Sigmoid colon (tissue), 7 donors: ENCODE measurements at regions of chr17 and their contacts with region 1.

Region 1: GRCh38 chr17:40303009-40303657 is 5.8 kb upstream of the RARA start:
- DNase-seq: no peak
- H3K4me3 ChIP-seq: no peak overlapping the region
- H3K27ac ChIP-seq: peak overlapping the region; percentile 4 to 86 (median 82)
- H3K4me1 ChIP-seq: peaks cover 0 to 64% (median 62%) of the 10 kb centered on the region in 4 donors
- H3K27me3 ChIP-seq: no peaks in the 10 kb centered on the region
- CTCF ChIP-seq: peak; percentile 73 to 85 (median 76)
- EP300 ChIP-seq: no peak
- POLR2A ChIP-seq: no peak

Region 2: GRCh38 chr17:40331743-40332641 is 28.9 kb after region 1 on chr17:
- intact Hi-C with region 1: no loop called
- DNase-seq: peak; percentile 95
- H3K4me3 ChIP-seq: peak overlapping the region in 3 of 4 donors; percentile 15 to 22 (median 16)
- H3K27ac ChIP-seq: peak overlapping the region; percentile 87 to 98 (median 96)
- H3K4me1 ChIP-seq: peaks cover 0 to 100% (median 95%) of the 10 kb centered on the region in 4 donors
- H3K27me3 ChIP-seq: no peaks in the 10 kb centered on the region
- CTCF ChIP-seq: no peak
- EP300 ChIP-seq: peak in 3 of 4 donors; percentile 47 to 79 (median 57)
- POLR2A ChIP-seq: no peak

Region 3: DNA sequence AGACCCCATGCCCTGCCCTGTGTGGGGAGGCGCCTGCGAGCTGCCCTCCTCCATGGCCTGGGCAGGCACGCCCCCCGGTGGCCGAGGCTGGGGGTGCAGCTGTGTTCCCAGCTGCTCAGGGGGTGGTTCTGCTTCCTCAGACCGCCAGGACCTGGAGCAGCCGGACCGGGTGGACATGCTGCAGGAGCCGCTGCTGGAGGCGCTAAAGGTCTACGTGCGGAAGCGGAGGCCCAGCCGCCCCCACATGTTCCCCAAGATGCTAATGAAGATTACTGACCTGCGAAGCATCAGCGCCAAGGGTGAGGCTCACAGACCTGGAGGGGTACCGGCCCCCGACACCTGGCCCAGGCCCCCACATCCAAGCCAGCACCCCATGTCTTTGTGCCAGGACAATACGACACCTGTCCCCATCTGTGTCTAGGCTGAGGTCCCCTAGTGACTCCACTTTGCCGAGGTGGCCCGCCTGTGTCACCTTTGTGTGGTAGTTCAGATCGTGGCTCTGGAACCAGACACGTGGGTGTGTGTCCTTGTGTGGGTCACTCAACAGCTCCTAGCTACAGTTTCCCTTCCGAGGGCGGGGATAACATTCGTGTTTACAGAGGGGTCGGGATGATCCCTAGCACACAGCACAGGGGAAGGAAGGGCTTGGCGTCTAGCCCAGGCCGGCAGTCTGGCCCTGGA is 52.1 kb after region 1 on chr17:
- intact Hi-C with region 1: loop called (anchors 1 kb)
- DNase-seq: peak; percentile 91
- H3K4me3 ChIP-seq: no peak overlapping the region
- H3K27ac ChIP-seq: peak overlapping the region; percentile 42 to 64 (median 48)
- H3K4me1 ChIP-seq: peaks cover 0 to 64% (median 53%) of the 10 kb centered on the region in 4 donors
- H3K27me3 ChIP-seq: no peaks in the 10 kb centered on the region
- CTCF ChIP-seq: peak; percentile 95 to 99 (median 97)
- EP300 ChIP-seq: no peak
- POLR2A ChIP-seq: no peak

Region 4: GRCh38 chr17:40417609-40418427 is 114.7 kb after region 1 on chr17 and contains the start of gene TOP2A:
- intact Hi-C with region 1: loop called (anchors 5 kb)
- DNase-seq: peak; percentile 99
- H3K4me3 ChIP-seq: peak within 1 kb of the TSS; percentile 36 to 59 (median 56)
- H3K27ac ChIP-seq: peak within 1 kb of the TSS; percentile 77 to 88 (median 80)
- H3K4me1 ChIP-seq: peaks cover 0 to 17% (median 10%) of the 10 kb centered on the region in 4 donors
- H3K27me3 ChIP-seq: no peaks in the 10 kb centered on the region
- CTCF ChIP-seq: no peak
- EP300 ChIP-seq: no peak
- POLR2A ChIP-seq: no peak
- total RNA-seq, gene TOP2A: 0.33 to 2.3 (median 1.8) TPM

Region 5: DNA sequence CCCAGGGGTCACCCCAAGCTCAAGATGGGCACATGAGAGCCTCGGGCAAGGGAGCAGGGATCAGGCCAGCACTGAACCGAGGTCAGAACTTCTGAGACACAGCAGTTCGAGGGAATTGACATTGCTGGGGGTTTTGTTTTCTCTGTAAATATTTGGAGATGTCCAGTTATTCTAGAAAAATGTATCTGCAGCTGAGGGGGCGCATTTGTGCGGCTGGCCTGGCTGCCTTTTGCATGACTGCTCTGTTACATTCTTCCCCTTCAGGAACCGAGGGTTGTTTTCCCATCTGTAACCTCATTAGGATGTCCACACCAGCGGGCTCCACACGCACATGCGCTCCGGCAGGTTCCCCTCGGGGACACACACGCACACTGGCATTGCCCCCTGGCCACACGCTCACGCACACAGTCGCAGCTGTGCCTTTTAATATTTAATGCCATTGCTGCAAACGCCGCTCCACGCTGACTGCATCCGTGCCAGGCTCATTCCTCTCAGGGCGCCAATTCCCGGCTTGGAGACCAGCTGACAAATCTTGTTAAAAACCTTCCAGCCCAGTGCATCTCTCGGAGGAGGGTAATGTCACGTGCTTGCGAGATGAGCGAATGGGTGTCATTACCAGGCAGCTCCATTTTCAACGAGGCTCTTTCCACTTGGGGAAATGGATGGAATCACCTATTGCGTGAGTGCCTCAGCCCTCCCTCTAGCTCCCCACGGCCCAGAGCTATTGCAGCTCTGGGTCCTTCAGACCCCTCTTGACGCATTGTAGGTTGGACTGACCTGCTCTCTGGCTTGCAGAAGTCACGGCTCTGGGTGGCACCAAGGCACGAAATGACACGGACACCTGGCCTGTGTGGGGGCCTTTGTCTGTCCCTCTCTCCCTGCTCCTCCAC is 249.0 kb after region 1 on chr17:
- intact Hi-C with region 1: loop called (anchors 5 kb)
- DNase-seq: peak; percentile 86
- H3K4me3 ChIP-seq: peak overlapping the region in 1 of 4 donors; percentile 5
- H3K27ac ChIP-seq: peak overlapping the region; percentile 74 to 90 (median 87)
- H3K4me1 ChIP-seq: peaks cover 0 to 80% (median 73%) of the 10 kb centered on the region in 4 donors
- H3K27me3 ChIP-seq: no peaks in the 10 kb centered on the region
- CTCF ChIP-seq: no peak
- EP300 ChIP-seq: peak in 1 of 4 donors; percentile 35
- POLR2A ChIP-seq: no peak